ENCODE measurements at regions of chr3 and their contacts with region 1.

Region 1: DNA sequence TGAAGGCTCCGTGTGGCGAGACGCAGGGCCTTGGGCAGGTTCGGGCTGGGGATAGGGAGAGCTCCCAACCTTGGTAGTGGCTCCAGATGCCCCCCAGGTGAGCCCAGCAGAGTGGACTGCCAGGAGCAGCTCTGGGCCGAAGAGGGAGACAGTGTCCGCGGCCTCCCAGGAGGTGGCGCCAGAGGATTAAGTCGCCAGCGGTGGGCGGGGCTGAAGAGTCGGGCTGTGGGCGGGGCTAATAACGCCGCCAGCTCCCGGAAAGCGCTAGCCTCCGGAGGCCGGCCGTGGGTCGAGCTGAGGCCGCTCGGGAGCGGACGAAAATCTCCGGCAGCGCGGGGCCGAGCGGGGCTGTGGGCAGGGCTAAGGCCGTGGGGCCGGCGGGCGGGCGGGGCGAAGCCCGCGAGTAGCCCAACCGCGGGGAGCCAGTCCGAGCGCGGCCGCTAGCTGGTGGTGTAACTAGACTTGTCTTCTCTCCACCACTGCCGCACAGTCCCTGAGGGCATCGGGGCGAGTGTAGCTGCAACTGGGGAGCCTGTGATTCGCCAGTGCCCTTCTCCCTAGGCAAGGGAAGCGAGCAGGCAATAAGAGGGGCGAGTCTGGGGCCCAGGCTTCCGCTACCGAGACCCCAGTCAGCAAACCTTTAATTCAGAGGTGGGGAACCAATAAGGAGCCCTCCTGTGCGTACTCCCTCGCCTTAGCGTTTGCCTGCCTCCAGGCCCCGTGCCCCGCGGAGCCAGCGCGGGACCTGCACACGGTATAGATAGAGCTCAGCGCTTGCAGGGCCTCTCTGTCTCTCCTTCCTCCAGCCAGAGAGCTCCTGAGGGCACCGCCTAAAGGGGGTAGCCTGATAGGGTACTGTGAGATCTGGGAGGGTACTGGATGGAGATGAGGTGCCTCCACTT is 14.4 kb upstream of the BSN start:
- DNase-seq: peak; percentile 91
- H3K4me3 Mint-ChIP-seq: peak overlapping the region; percentile 73
- H3K27ac Mint-ChIP-seq: peak overlapping the region; percentile 46
- H3K4me1 Mint-ChIP-seq: peaks cover 6% of the 10 kb centered on the region
- H3K27me3 Mint-ChIP-seq: peaks cover 16% of the 10 kb centered on the region

Region 2: DNA sequence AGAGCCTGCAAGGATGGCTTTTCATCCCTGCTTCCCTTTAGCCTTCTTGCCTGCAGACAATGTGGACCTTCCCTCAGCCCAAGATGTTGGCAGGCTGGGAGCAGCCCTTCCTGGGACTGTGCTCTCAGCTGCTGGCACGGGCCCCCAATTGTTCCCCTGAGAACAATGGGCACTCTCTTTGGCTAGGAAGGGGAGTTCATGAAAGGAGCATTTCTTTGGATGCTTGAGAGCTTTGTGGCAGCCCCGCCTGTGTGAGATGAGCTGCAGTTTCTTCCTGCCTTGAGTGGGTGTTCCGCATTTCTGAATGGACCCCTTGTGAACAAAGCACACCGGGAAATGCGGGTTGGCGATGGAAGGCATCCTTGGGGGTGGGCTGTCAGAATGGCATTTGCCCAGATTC is 20.6 kb before region 1 on chr3:
- CTCF ChIA-PET with region 1: interaction called, 18 read pairs
- POLR2A ChIA-PET with region 1: no interaction called
- DNase-seq: no peak
- H3K4me3 Mint-ChIP-seq: no peak overlapping the region
- H3K27ac Mint-ChIP-seq: no peak overlapping the region
- H3K4me1 Mint-ChIP-seq: no peaks in the 10 kb centered on the region
- H3K27me3 Mint-ChIP-seq: no peaks in the 10 kb centered on the region

Region 3: GRCh38 chr3:49553692-49554632 is 14.1 kb after region 1 on chr3 and contains the start of gene BSN:
- CTCF ChIA-PET with region 1: interaction called, 27 read pairs
- POLR2A ChIA-PET with region 1: no interaction called
- DNase-seq: peak; percentile 85
- H3K4me3 Mint-ChIP-seq: peak within 1 kb of the TSS; percentile 80
- H3K27ac Mint-ChIP-seq: peak within 1 kb of the TSS; percentile 78
- H3K4me1 Mint-ChIP-seq: peaks cover 28% of the 10 kb centered on the region
- H3K27me3 Mint-ChIP-seq: peaks cover 40% of the 10 kb centered on the region
- total RNA-seq, gene BSN: 0.06 to 0.07 TPM

Region 4: DNA sequence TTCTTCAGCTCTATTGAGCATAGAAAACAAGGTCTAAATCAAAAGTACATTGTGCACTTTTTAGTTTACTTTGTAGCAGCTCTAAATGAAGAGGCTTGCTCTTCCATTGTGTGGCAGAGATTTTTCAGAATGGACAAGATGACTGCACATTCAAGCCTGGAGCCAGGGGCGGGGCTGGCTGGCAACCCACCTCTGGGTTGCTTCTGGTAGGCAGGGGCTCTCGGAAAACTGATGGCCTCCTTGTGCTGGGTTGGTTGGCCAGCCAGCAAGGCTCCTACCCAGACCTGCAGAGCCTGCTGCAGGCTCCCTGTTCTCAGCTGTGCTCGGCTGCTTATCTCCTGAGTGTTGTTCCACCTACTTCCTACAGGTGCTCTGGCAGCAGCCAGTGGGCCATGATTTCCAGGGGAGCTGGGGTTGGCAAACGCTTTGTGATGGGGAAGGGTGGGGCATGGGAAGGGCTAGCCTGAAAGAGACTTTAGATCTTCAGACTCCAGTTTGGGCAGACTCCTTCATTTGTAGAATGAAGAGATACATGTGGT is 23.2 kb after region 1 on chr3:
- CTCF ChIA-PET with region 1: interaction called, 20 read pairs
- POLR2A ChIA-PET with region 1: no interaction called
- DNase-seq: no peak
- H3K4me3 Mint-ChIP-seq: no peak overlapping the region
- H3K27ac Mint-ChIP-seq: no peak overlapping the region
- H3K4me1 Mint-ChIP-seq: no peaks in the 10 kb centered on the region
- H3K27me3 Mint-ChIP-seq: peaks cover 39% of the 10 kb centered on the region

Region 5: GRCh38 chr3:49652903-49653415 is 113.0 kb after region 1 on chr3:
- CTCF ChIA-PET with region 1: interaction called, 10 read pairs
- POLR2A ChIA-PET with region 1: no interaction called
- DNase-seq: no peak
- H3K4me3 Mint-ChIP-seq: no peak overlapping the region
- H3K27ac Mint-ChIP-seq: no peak overlapping the region
- H3K4me1 Mint-ChIP-seq: no peaks in the 10 kb centered on the region
- H3K27me3 Mint-ChIP-seq: no peaks in the 10 kb centered on the region

Region 6: GRCh38 chr3:49666592-49666991 is 126.7 kb after region 1 on chr3:
- CTCF ChIA-PET with region 1: interaction called, 88 read pairs
- POLR2A ChIA-PET with region 1: interaction called, 13 read pairs
- DNase-seq: no peak
- H3K4me3 Mint-ChIP-seq: no peak overlapping the region
- H3K27ac Mint-ChIP-seq: no peak overlapping the region
- H3K4me1 Mint-ChIP-seq: peaks cover 4% of the 10 kb centered on the region
- H3K27me3 Mint-ChIP-seq: no peaks in the 10 kb centered on the region

Region 7: GRCh38 chr3:49673715-49674496 is 134.0 kb after region 1 on chr3 and contains the start of gene APEH:
- CTCF ChIA-PET with region 1: interaction called, 88 read pairs
- POLR2A ChIA-PET with region 1: interaction called, 13 read pairs
- DNase-seq: peak; percentile 98
- H3K4me3 Mint-ChIP-seq: peak within 1 kb of the TSS; percentile 84
- H3K27ac Mint-ChIP-seq: peak within 1 kb of the TSS; percentile 99
- H3K4me1 Mint-ChIP-seq: peaks cover 37% of the 10 kb centered on the region
- H3K27me3 Mint-ChIP-seq: no peaks in the 10 kb centered on the region
- total RNA-seq, gene APEH: 137 TPM